Activated naive CD4-positive, alpha-beta T cell treated with anti-CD3 and anti-CD28 coated beads for 36 hours (primary cell): ENCODE measurements at regions of chr12 and their contacts with region 1.

Region 1: DNA sequence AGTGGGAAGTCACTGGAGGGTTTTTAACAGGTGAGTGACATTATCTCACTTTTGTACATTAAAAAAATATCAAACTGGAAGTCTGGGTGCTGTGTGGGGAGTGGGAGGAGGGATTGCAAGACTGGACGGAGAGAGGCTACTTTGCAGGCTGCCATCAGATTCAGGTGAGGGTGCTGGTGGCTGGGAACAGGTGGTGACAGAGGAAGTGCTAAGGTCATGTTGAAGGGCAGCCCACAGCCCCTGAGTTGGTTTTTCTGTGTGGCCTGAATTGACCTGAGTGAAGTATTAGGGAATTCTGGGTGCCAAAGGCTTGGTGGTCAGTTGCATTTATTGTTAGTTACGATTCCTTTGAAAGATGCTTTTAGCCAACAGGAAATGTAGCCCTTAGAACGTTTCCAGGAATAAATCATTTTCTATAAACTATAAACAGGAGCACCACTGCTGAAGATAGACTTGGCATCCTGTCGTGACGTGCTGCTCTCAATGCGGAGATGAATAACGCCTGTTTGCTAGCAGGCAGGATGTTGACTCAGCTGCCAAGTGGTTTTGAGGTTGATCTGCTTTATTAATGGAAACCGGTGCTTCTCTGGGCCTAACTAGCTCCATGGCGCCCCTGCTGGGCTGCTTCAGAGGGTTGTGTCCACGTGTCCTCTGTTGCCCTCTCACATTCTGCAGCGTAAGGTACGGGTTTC is 707.5 kb upstream of the TMEM132C start:
- DNase-seq: peak; percentile 87
- H3K4me3 Mint-ChIP-seq: no peak overlapping the region
- H3K27ac Mint-ChIP-seq: peak overlapping the region; percentile 89
- H3K4me1 Mint-ChIP-seq: peaks cover 11% of the 10 kb centered on the region
- H3K27me3 Mint-ChIP-seq: peaks cover 12% of the 10 kb centered on the region

Region 2: GRCh38 chr12:127485528-127485927 is 74.0 kb before region 1 on chr12:
- CTCF ChIA-PET with region 1: no interaction called
- intact Hi-C with region 1: loop called (anchors 1 kb)
- DNase-seq: peak; percentile 66
- H3K4me3 Mint-ChIP-seq: no peak overlapping the region
- H3K27ac Mint-ChIP-seq: no peak overlapping the region
- H3K4me1 Mint-ChIP-seq: no peaks in the 10 kb centered on the region
- H3K27me3 Mint-ChIP-seq: peaks cover 2% of the 10 kb centered on the region